Left cardiac atrium (tissue), 4 donors: ENCODE measurements at regions of chr16 and their contacts with region 1.

Region 1: DNA sequence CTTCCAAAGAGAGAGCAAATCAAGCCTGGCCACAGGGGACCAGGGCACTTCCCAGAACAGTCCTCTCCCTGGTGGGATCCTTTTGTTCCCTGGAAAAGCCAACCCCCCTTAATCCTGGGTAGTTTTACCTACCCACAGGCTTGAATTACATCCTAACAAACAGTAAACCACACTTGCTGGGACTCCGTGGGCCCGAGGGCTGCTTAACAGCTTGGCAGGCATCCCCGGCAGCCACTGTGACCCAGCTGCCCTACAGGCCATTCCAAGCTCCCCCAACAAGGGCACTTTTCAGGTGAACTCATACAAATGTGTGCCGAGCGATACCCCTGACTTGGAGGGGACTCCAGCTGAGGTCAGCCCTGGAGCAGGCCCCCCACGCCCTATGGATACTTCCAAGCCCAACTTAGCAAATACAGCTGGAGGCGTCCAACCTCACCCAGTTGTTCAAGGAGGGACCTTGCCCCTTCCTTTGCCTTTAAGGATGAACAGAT is 26.4 kb downstream of the ADCY9 start:
- DNase-seq: no peak
- ATAC-seq: no peak

Region 2: GRCh38 chr16:4053301-4053845 is 36.5 kb before region 1 on chr16:
- intact Hi-C with region 1: loop called in 1 of 2 experiments (anchors 5 kb)
- DNase-seq: peak; percentile 70
- ATAC-seq: peak; percentile 78 to 79